AG04449 (cell line): ENCODE measurements at regions of chr12 and their contacts with region 1.

Region 1: GRCh38 chr12:56593909-56594621 is 36.1 kb downstream of the BAZ2A start:
- DNase-seq: peak; percentile 46
- H3K4me3 ChIP-seq: no peak overlapping the region
- CTCF ChIP-seq: peak; percentile 89

Region 2: DNA sequence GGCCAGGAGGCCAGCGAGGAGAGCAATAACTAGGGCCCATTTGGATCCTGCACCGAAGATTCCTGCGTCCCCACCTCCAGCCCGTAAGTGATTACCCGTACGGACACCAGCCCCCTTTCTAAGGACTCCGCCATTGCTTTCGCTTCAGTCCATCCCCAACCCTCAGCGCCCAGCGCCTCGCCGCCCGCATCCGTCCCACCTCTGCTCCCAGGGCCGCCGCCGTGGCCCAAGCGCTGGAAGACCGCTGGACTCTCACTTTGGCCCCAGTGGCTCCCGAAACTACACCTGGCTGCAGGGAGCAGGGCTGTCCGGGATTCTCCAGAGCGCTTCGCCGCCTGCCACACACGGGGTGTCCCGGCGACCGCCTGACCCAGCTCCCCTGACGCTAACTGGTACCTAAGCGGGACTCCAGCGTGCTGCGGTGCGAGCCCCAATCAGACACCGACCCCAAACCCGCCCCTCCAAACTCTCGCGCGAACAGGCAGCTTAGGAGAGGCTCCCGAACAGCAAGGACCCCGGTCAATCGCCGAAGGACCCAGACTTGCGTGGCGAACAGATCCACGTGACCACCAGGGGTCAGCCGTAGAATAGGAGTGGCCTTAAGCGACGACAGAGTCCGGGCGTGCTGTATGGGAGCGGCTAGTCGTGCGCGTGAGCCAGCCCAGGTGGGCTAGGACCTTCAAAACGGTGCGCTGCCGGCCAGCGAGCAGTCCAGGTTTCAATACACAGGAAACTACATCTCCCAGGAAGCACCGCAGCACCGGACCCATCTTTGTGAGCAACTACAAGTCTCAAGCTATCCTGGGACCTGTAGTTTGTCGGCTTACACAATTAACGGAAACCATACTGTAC is 278.2 kb before region 1 on chr12 and contains the start of gene CNPY2:
- CTCF ChIA-PET with region 1: no interaction called
- POLR2A ChIA-PET with region 1: no interaction called
- DNase-seq: peak; percentile 77
- H3K4me3 ChIP-seq: peak within 1 kb of the TSS; percentile 96
- CTCF ChIP-seq: peak; percentile 14

Region 3: DNA sequence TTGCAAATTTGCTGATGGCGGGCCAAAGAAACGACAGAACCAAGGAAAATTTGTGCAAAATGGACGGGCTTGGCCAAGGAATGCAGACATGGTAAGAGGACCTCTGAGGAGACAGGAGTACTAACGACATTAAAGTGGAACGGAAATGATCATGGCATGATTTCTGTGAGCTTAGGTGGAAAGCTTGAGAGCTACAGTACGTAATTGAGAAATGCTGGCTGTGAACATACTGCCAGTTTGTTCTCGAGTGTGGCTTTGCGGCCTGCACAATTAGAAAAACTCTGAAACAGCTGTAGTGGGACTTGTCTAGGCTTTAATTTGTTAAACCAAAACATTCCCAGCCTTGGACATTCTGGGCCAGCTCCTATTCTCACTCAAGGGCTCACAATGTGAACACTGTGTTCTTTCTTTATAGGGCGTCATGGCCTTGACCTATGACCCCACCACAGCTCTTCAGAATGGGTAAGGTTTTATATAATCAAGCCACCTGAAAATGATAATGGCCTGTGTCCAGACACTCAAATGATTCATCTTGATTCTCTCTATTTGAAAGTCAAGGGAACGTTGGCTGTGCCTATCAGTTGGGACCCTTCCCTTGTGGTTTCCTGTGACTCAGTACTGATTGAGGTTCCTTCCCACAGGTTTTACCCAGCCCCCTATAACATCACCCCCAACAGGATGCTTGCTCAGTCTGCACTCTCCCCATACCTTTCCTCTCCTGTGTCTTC is 12.5 kb before region 1 on chr12:
- CTCF ChIA-PET with region 1: interaction called, 17 read pairs
- POLR2A ChIA-PET with region 1: no interaction called
- DNase-seq: no peak
- H3K4me3 ChIP-seq: no peak overlapping the region
- CTCF ChIP-seq: no peak